ENCODE measurements at regions of chr9 and their contacts with region 1.

Region 1: DNA sequence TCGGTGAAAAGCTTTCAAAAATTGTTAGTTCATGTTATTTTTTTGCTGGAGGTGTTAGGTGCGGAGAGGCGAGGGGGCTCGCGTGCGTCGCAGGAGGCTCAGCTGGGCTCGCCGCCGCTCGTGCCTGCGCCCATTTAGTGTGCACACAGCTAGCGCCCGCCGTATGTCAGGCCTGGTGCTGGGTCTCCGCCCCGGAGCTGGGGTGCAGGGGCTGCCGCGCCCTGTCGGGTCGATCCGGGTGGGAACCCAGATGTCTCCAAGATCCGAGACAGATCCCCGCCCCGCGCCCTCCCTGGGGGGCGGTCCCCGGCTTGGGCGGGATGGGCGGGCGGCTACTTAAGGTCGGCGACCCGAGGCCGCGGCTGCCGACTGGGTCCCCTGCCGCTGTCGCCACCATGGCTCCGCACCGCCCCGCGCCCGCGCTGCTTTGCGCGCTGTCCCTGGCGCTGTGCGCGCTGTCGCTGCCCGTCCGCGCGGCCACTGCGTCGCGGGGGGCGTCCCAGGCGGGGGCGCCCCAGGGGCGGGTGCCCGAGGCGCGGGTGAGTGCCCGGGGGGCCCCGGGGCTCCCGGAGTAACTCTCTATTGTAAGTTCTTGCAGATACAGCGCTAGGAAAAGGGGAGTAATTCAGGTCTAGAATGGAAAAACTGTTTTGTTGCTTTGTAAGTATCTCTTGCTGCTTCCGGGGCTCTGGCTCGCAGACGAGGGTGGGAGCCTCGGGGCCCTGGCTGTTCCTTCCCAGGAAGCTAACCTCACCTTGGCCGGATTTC is 31.7 kb downstream of the GSN start:
- DNase-seq: peak; percentile 92
- ATAC-seq: peak; percentile 72

Region 2: GRCh38 chr9:121246821-121247561 is 52.7 kb before region 1 on chr9:
- intact Hi-C with region 1: no loop called
- DNase-seq: no peak
- ATAC-seq: no peak

Region 3: DNA sequence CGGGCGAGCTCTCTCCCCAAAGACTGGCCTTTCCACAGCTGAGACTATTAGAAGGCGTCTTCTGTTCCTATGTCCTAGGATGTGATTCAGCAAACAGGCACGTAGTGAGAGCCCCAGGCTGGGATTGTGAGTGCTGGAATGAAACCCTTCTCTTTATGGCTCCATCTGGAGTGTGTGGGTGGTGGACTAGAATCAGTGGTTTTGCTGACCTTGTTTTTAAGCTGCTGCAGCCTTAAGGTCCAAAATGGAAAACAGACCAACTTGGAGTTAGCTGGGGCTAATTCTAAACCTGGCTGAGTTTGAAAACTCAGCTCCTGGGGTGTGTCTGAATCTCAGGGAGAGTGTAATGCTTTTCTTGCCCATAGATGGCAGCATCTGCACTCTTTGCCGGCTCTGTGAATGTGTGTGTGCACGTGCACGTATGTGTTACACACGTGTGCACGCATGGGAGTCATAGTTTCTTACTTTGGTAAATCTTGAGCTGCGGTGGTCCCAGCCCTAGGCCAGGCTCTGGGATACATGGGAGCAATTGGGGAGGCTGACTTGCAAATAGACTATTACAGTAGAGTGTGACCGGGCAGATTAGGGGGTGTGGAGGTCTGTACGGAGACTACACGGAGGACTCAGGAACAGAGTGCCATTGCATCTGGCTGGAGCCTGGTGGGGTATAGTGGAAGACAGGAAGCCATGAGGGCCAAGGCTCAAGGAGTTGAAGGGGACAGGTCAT is 21.0 kb before region 1 on chr9:
- intact Hi-C with region 1: loop called (anchors 2 kb)
- DNase-seq: peak; percentile 67
- ATAC-seq: peak; percentile 65